Activated naive CD8-positive, alpha-beta T cell treated with anti-CD3 and anti-CD28 coated beads, Interleukin-2, amount 10 ng/mL, durations not matched to agents 7 days and 5 days (primary cell): ENCODE measurements at regions of chr9 and their contacts with region 1.

Region 1: DNA sequence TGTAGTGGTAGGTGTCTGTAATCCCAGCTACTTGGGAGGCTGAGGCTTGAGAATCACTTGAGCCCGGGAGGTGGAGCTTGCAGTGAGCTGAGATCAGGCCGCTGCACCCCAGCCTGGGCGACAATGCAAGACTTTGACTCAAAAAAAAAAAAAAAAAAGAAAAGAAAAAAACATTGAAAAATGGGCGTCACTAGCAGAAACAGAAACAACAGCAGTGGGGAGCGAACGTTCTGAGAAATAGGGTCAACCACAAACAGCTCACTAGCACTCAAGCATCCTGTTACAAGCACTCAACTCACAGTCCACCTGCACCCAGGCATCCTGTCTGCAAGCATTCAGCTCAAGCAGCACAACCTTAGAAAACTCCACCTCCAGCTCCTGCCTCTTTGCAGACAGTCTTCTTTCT is 17.2 kb downstream of the TRIM14 start:
- DNase-seq: peak; percentile 68
- ATAC-seq: peak; percentile 99
- H3K4me3 Mint-ChIP-seq: peak overlapping the region; percentile 89
- H3K27ac Mint-ChIP-seq: peak overlapping the region; percentile 98
- H3K4me1 Mint-ChIP-seq: peaks cover 62% of the 10 kb centered on the region
- H3K27me3 Mint-ChIP-seq: no peaks in the 10 kb centered on the region

Region 2: GRCh38 chr9:98118640-98119601 is 17.1 kb after region 1 on chr9 and contains the start of gene TRIM14:
- POLR2A ChIA-PET with region 1: interaction called, 125 read pairs
- DNase-seq: peak; percentile 81
- ATAC-seq: peak; percentile 72
- H3K4me3 Mint-ChIP-seq: peak within 1 kb of the TSS; percentile 91
- H3K27ac Mint-ChIP-seq: peak within 1 kb of the TSS; percentile 94
- H3K4me1 Mint-ChIP-seq: peaks cover 41% of the 10 kb centered on the region
- H3K27me3 Mint-ChIP-seq: no peaks in the 10 kb centered on the region
- total RNA-seq, gene TRIM14: 99.0 to 108 TPM

Region 3: GRCh38 chr9:98192503-98193335 is 90.8 kb after region 1 on chr9 and contains the start of gene CORO2A:
- POLR2A ChIA-PET with region 1: interaction called, 13 read pairs
- DNase-seq: peak; percentile 86
- ATAC-seq: peak; percentile 72
- H3K4me3 Mint-ChIP-seq: peak within 1 kb of the TSS; percentile 80
- H3K27ac Mint-ChIP-seq: peak within 1 kb of the TSS; percentile 63
- H3K4me1 Mint-ChIP-seq: peaks cover 15% of the 10 kb centered on the region
- H3K27me3 Mint-ChIP-seq: peaks cover 4% of the 10 kb centered on the region
- total RNA-seq, gene CORO2A: 11.7 to 12.0 TPM